ENCODE measurements at regions of chr2 and their contacts with region 1.

Region 1: GRCh38 chr2:7037340-7038333 is 120.4 kb downstream of the RNF144A start:
- DNase-seq: peak; percentile 40
- ATAC-seq: peak; percentile 58
- H3K4me3 Mint-ChIP-seq: no peak overlapping the region
- H3K27ac Mint-ChIP-seq: no peak overlapping the region
- H3K4me1 Mint-ChIP-seq: no peaks in the 10 kb centered on the region
- H3K27me3 Mint-ChIP-seq: no peaks in the 10 kb centered on the region
- CTCF ChIP-seq: peak; percentile 49

Region 2: GRCh38 chr2:6986301-6987176 is 51.1 kb before region 1 on chr2:
- CTCF ChIA-PET with region 1: no interaction called
- POLR2A ChIA-PET with region 1: no interaction called
- intact Hi-C with region 1: no loop called
- DNase-seq: no peak
- ATAC-seq: no peak
- H3K4me3 Mint-ChIP-seq: no peak overlapping the region
- H3K27ac Mint-ChIP-seq: no peak overlapping the region
- H3K4me1 Mint-ChIP-seq: peaks cover 2% of the 10 kb centered on the region
- H3K27me3 Mint-ChIP-seq: peaks cover 3% of the 10 kb centered on the region
- CTCF ChIP-seq: no peak

Region 3: DNA sequence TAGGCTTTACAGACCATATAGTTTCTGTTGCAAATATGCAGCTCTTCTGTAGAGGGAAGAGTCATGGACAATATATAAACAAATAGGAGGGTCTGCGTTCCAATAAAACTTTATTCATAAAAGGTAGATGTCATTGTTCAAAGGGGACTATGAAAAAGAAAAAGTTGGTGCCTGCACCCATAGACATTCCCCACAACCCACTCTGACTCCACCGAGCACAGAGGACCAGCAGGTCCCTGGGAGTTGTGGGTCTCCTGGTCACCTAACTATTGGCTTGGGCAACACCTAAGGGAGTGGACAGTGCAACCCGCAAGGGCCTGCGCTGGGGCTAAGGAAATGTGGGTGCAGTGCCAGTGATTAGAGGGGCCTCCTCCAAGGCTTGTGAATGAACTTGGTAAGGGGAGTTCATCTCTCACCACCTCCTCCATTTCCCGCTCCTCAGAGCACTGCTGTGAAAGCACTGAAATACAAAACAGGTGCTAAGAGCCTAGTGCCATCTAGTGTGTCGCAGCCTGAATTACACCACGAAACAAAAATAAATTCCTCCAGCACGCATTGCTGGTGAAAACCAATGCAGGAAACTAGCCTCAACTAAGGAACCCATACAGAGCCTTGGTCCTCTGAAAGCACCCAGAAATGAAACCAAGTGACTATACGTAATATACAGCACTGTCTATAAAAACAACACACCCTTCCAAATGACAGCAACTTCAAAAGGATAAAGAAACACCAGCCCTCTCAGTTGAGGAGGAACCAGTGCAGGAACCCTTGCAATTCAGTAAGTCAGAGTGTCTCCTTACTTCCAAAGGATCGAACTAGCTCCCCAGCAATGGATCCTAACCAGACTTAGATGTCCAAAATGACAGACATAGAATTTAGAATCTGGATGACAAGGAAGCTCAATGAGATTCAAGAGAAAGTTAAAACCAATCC is 46.2 kb after region 1 on chr2:
- CTCF ChIA-PET with region 1: interaction called, 3 read pairs
- POLR2A ChIA-PET with region 1: no interaction called
- intact Hi-C with region 1: loop called (anchors 1 kb)
- DNase-seq: no peak
- ATAC-seq: peak; percentile 40
- H3K4me3 Mint-ChIP-seq: no peak overlapping the region
- H3K27ac Mint-ChIP-seq: no peak overlapping the region
- H3K4me1 Mint-ChIP-seq: no peaks in the 10 kb centered on the region
- H3K27me3 Mint-ChIP-seq: peaks cover 16% of the 10 kb centered on the region
- CTCF ChIP-seq: no peak

Region 4: DNA sequence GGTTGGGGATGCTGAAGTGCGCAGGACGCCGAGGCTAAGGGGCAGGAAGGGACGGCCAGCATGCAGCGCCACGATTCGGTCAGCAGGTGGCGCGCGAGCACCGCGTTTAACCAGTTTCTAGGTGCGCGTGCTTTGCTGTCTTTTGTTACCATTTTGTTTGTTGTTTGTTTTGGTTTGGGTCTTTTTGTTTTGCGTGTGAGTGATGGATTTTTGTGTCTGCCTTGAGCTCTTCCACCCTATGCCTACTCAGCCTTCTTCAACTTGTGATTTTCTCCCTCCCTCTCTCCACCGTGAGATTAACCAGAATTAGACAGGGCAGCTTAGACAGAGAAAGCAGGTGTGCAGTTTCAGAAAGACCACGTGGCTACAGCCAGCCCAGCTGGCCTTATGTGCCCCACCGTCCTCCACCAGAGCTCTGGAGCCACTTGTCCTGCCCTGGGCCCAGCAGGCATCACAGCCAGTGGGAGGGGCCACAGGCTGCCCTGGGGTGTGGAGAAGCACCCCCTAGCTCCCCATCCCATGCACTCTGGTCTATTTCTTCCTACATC is 59.8 kb after region 1 on chr2:
- CTCF ChIA-PET with region 1: no interaction called
- POLR2A ChIA-PET with region 1: no interaction called
- intact Hi-C with region 1: loop called (anchors 5 kb)
- DNase-seq: peak; percentile 58
- ATAC-seq: peak; percentile 81
- H3K4me3 Mint-ChIP-seq: peak overlapping the region; percentile 33
- H3K27ac Mint-ChIP-seq: no peak overlapping the region
- H3K4me1 Mint-ChIP-seq: peaks cover 11% of the 10 kb centered on the region
- H3K27me3 Mint-ChIP-seq: peaks cover 23% of the 10 kb centered on the region
- CTCF ChIP-seq: peak; percentile 84